PC-3 (cell line): ENCODE measurements at regions of chr10 and their contacts with region 1.

Region 1: DNA sequence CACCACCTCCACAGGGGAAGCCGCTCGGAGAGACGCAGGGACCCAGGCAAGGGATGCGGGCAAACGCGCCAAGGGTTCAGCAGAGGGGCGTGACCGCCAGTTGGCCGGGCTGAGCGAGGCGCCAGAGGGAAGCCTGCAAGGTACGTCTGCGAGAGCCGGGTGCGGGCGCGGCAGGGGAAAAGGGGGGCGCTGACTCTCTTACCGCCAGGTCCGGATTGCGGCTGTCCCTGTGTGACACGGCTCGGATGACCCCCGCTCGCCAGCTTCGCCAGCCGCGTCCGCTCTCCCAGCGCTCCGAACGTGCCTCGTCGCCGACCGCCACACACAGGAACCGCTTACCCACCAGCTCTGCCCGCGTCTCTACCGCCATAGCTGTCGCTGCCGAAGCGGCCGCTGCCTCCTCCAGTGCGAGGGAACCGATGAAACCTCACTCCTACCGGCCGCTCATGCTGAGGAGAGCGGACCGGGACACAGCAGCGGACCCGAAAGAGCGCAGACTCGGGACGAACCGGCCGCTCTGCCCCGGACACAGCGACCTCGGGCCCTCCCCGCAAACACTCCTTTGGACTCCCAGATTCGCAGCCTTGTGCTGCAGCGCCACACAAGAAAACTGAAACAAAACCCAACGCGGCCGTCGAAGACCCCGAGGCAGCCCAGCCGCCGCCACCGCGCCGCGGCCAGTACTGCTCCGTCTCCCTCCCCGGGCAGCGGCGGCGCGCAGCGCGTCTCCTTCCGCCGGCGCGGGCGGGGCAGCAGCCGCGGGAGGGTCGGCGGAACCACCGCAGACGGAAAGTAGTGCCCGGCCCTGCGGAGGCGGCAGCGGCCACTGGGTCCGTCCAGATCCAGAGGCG is at the start of gene JMJD1C:
- DNase-seq: peak; percentile 97
- ATAC-seq: peak; percentile 67
- H3K4me3 ChIP-seq: peak within 1 kb of the TSS; percentile 83
- H3K27ac ChIP-seq: peak within 1 kb of the TSS; percentile 69
- H3K4me1 ChIP-seq: peaks cover 26% of the 10 kb centered on the region
- H3K27me3 ChIP-seq: no peaks in the 10 kb centered on the region
- CTCF ChIP-seq: peak; percentile 34
- total RNA-seq, gene JMJD1C: 121 and 139 TPM in 2 replicates

Region 2: DNA sequence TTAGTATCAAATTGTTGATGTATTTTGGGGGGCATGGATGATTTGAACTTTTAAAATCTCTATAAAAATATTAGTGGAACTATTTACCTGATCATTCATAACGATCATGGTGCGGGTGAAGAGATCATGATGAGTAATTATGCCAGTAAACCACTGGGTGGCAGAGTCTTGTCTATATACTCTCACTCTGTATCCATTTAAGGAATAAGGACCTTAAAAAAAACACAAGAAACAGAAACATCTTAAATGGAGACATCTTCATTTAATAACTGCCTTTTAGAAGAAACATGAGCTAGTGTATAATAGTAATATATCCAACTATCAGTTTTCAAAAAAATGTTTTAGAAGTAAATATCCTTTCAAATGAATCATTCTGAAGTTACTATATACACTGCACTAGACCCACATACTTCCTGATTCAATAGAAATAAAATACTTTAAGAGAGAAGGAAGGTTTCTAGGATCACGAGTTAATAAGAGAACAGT is 248.4 kb before region 1 on chr10:
- CTCF ChIA-PET with region 1: no interaction called
- POLR2A ChIA-PET with region 1: no interaction called
- intact Hi-C with region 1: loop called (anchors 1 kb)
- DNase-seq: peak; percentile 92
- ATAC-seq: peak; percentile 85
- H3K4me3 ChIP-seq: no peak overlapping the region
- H3K27ac ChIP-seq: no peak overlapping the region; the same call in 1 of the 2 replicates
- H3K4me1 ChIP-seq: peaks cover 5% of the 10 kb centered on the region
- H3K27me3 ChIP-seq: no peaks in the 10 kb centered on the region
- CTCF ChIP-seq: peak; percentile 100

Region 3: DNA sequence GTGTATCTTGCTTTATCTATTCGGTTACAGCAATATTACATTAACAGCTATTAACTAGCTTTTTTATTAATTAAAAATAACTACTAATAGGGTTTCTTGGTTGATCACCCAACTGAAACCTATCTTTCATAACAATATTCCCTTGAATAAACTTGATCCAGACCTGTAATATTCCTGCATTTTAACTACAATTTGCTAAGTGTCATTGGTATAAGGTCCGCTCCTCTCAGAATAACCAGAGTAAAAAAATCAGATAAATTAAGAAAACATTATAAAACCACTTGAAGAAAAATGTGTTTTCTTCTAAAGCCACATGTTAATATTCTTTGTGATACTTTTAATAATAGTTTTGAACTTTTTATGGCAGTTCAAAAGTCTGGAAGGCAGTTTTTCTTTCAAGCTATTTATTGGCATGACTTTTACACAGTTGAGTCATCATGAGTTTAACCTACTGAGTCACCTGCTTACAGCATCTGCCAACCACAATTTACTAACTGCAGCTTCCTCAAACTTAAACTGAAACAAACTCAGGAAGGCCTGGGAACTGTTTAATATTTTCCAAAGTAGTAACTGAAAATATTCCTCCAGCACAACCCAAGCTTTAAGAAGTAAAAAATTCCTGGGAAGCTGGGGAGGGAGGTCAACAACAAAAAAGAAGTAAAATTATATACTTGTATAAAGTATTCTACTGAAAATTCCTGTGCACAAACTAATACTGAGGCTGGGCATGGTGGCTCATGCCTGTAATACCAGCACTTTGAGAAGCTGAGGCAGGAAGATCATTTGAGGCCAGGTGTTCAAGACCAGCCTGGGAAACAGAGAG is 229.2 kb before region 1 on chr10:
- CTCF ChIA-PET with region 1: no interaction called
- POLR2A ChIA-PET with region 1: no interaction called
- intact Hi-C with region 1: no loop called
- DNase-seq: peak; percentile 100
- ATAC-seq: peak; percentile 93
- H3K4me3 ChIP-seq: peak overlapping the region; percentile 41
- H3K27ac ChIP-seq: peak overlapping the region; percentile 86
- H3K4me1 ChIP-seq: peaks cover 56% of the 10 kb centered on the region
- H3K27me3 ChIP-seq: no peaks in the 10 kb centered on the region
- CTCF ChIP-seq: no peak

Region 4: DNA sequence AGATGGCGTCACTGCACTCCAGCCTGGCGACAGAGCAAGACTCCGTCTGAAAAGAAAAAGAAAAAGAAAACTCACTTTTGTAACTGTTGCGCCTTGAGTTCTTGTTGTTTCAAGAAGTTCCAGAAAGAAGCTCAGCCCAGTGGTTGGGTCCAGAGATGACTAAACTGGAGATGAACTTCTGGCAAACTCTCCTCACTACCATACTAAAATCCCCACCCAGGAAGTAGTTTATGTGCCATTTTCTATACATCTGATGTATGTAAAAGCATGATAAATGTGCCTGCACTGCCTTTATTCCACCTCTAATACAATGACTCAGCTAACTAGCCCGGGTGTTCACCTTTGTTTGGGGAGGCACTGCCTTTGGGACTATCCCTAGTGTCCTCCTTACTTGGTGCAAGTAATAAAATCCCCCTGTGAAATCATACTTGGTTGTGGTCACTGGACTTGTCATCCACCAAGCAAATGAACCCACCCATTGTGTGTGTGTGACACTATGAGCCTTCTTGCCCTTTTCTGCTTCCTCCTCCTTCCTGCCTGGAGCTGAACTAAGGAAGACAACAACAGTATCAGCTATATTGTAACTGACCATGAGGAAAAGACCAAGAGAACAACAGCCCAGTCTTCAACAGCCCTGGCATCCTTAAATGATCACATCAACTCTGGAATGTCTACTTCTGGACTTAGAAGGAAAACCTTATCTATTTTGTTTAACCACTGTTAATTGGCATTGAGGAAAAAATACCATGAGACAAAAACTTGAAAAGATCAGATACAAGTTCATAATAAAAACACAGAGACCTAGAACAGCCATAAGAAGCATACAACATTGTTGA is 33.3 kb before region 1 on chr10:
- CTCF ChIA-PET with region 1: no interaction called
- POLR2A ChIA-PET with region 1: interaction called, 5 read pairs
- intact Hi-C with region 1: loop called (anchors 1 kb)
- DNase-seq: peak; percentile 98
- ATAC-seq: peak; percentile 55
- H3K4me3 ChIP-seq: no peak overlapping the region
- H3K27ac ChIP-seq: peak overlapping the region; percentile 71
- H3K4me1 ChIP-seq: peaks cover 65% of the 10 kb centered on the region
- H3K27me3 ChIP-seq: no peaks in the 10 kb centered on the region
- CTCF ChIP-seq: no peak

Region 5: GRCh38 chr10:63554657-63555056 is 89.1 kb after region 1 on chr10:
- CTCF ChIA-PET with region 1: interaction called, 3 read pairs
- POLR2A ChIA-PET with region 1: interaction called, 5 read pairs
- intact Hi-C with region 1: loop called (anchors 1 kb)
- DNase-seq: peak; percentile 89
- ATAC-seq: peak; percentile 45
- H3K4me3 ChIP-seq: peak overlapping the region; percentile 53
- H3K27ac ChIP-seq: peak overlapping the region; percentile 92
- H3K4me1 ChIP-seq: peaks cover 48% of the 10 kb centered on the region
- H3K27me3 ChIP-seq: no peaks in the 10 kb centered on the region
- CTCF ChIP-seq: no peak

Region 6: DNA sequence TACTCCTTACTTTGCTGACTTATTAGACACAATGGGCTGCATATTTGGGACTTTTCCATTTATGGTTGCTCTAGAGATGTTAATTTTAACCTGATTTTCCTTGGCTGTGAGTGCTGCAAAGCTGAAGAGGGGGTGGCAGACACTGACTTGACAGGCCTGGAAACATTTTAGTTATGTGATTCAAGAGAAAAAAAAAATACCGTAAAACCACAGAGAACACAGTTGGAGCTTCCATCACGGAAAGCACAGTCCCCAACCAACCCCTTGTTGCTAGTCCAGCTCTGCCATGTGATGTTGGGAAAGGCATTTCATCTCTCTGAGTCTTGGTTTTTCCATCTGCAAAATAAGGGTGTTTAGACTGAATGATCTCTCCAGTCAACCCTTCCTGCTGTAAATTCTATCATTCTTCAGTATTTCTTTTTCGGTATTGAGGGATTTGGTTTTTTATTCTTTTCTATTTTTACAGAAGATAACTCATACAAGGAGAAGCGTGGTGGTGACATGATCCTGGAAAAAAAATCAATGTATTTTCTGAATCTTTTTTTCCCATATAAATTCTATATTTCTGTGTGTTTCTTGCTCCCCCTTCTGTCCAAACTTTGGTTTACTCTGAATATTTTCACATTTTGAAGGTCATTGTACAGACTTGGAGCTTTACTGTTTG is 301.8 kb after region 1 on chr10:
- CTCF ChIA-PET with region 1: no interaction called
- POLR2A ChIA-PET with region 1: no interaction called
- intact Hi-C with region 1: loop called (anchors 5 kb)
- DNase-seq: peak; percentile 71
- ATAC-seq: peak; percentile 44
- H3K4me3 ChIP-seq: no peak overlapping the region
- H3K27ac ChIP-seq: no peak overlapping the region
- H3K4me1 ChIP-seq: no peaks in the 10 kb centered on the region
- H3K27me3 ChIP-seq: no peaks in the 10 kb centered on the region
- CTCF ChIP-seq: peak; percentile 83